ENCODE measurements at regions of chr13 and their contacts with region 1.

Region 1: DNA sequence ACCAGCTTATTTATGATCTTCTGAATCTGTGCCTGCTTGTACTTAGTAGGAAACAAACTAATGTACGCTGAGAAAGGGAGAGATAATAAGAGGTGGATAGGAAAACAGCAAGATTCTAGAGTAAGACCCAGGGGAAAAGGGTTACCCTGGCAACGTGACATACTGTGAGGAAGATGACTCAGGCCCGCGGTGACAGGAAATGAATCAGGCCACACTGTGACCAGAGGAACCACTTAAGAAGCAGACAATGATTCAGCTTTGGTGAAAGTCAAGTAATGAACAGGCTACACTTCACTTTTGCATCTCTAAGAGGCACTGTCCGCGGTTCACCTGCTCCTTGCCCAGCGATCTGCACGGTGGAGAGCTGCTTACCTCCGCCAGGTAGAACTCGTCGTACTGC is 158.2 kb downstream of the NALCN start:
- DNase-seq: peak; percentile 79 to 98
- H3K4me3 ChIP-seq: peak overlapping the region; percentile 60
- H3K27ac ChIP-seq: peak overlapping the region; percentile 95
- H3K4me1 ChIP-seq: peaks cover 18% of the 10 kb centered on the region
- H3K27me3 ChIP-seq: no peaks in the 10 kb centered on the region
- CTCF ChIP-seq: peak; percentile 49; the same call in 1 of the 2 replicates

Region 2: GRCh38 chr13:100738176-100738855 is 519.8 kb before region 1 on chr13:
- CTCF ChIA-PET with region 1: no interaction called
- POLR2A ChIA-PET with region 1: no interaction called
- intact Hi-C with region 1: no loop called
- DNase-seq: no peak
- H3K4me3 ChIP-seq: no peak overlapping the region
- H3K27ac ChIP-seq: no peak overlapping the region
- H3K4me1 ChIP-seq: no peaks in the 10 kb centered on the region
- H3K27me3 ChIP-seq: peaks cover 53% of the 10 kb centered on the region
- CTCF ChIP-seq: no peak

Region 3: DNA sequence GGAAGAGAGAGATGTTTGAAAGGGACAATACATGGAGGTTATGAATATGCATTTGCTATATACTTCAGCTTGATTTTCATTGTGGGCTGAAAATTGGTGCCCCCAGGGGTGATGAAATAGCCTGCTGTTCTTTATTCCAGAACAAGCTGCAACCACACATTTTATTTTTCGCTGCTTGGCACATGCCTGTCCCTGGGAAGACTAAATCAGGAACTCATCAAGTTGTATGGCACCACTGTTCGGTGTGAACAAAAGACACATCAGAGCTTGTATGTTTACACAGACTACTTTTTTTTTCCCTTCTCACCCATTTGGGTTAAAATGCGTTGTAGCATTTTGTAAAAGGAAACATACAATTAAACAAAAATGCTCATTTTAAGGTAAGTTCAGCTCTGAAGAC is 72.5 kb before region 1 on chr13:
- CTCF ChIA-PET with region 1: no interaction called
- POLR2A ChIA-PET with region 1: no interaction called
- intact Hi-C with region 1: loop called (anchors 2 kb)
- DNase-seq: no peak
- H3K4me3 ChIP-seq: no peak overlapping the region
- H3K27ac ChIP-seq: no peak overlapping the region
- H3K4me1 ChIP-seq: no peaks in the 10 kb centered on the region
- H3K27me3 ChIP-seq: no peaks in the 10 kb centered on the region
- CTCF ChIP-seq: no peak

Region 4: GRCh38 chr13:101514788-101515187 is 256.7 kb after region 1 on chr13:
- CTCF ChIA-PET with region 1: no interaction called
- POLR2A ChIA-PET with region 1: no interaction called
- intact Hi-C with region 1: loop called (anchors 1 kb)
- DNase-seq: peak; percentile 29 to 64
- H3K4me3 ChIP-seq: no peak overlapping the region
- H3K27ac ChIP-seq: no peak overlapping the region
- H3K4me1 ChIP-seq: no peaks in the 10 kb centered on the region; the same call in 1 of the 2 replicates
- H3K27me3 ChIP-seq: no peaks in the 10 kb centered on the region
- CTCF ChIP-seq: peak; percentile 92

Region 5: GRCh38 chr13:102708211-102708610 is 1450.1 kb after region 1 on chr13:
- CTCF ChIA-PET with region 1: no interaction called
- POLR2A ChIA-PET with region 1: interaction called, 10 read pairs
- intact Hi-C with region 1: no loop called
- DNase-seq: no peak
- H3K4me3 ChIP-seq: no peak overlapping the region
- H3K27ac ChIP-seq: peak overlapping the region; percentile 41; the same call in 1 of the 2 replicates
- H3K4me1 ChIP-seq: peaks cover 53% of the 10 kb centered on the region
- H3K27me3 ChIP-seq: no peaks in the 10 kb centered on the region
- CTCF ChIP-seq: no peak

Measured in PC-9 (cell line).